Activated naive CD4-positive, alpha-beta T cell treated with anti-CD3 and anti-CD28 coated beads for 36 hours (primary cell): ENCODE measurements at regions of chr12 and their contacts with region 1.

Region 1: GRCh38 chr12:96194971-96195844 is 1.0 kb downstream of the ELK3 start:
- DNase-seq: peak; percentile 91
- H3K4me3 Mint-ChIP-seq: peak overlapping the region; percentile 99
- H3K27ac Mint-ChIP-seq: peak overlapping the region; percentile 100
- H3K4me1 Mint-ChIP-seq: peaks cover 54% of the 10 kb centered on the region
- H3K27me3 Mint-ChIP-seq: no peaks in the 10 kb centered on the region

Region 2: DNA sequence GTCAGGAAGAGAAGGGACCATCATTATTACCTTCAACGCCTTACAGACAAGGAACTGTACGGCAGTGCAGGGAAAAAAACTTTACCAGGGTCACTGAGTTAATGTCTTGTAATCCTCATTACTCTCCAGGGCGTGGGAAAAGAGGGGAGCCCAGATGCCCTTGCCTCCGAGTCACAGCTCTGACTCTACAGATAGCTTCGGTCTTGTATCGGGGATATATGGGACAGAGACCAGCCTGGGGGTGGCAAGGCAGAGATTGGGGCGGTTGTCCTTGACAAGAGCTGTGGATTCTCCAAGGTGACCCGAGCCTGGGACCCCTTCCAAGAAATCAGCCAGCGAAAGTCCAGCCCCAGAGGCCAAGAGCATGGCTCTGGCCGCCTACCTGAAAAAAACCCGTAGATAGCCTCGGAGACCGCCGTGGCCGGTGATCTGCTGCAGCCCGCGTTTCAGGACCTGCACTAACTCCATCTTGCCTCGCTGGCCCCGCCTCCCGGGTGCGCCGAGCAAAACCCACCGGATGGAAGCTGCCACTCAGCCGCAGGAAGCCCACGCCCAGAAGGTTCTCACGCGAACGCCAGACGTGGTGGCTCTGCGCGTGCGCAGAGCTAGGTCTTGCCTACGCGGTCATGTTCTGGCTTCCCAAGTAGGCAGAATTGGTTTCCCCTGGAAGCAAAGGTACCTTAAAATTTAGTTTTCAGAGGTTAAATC is 1191.8 kb before region 1 on chr12 and contains the start of gene NDUFA12:
- CTCF ChIA-PET with region 1: no interaction called
- intact Hi-C with region 1: loop called (anchors 2 kb)
- DNase-seq: peak; percentile 97
- H3K4me3 Mint-ChIP-seq: peak within 1 kb of the TSS; percentile 89
- H3K27ac Mint-ChIP-seq: peak within 1 kb of the TSS; percentile 86
- H3K4me1 Mint-ChIP-seq: peaks cover 51% of the 10 kb centered on the region
- H3K27me3 Mint-ChIP-seq: no peaks in the 10 kb centered on the region
- total RNA-seq, gene NDUFA12: 147 to 160 TPM

Region 3: DNA sequence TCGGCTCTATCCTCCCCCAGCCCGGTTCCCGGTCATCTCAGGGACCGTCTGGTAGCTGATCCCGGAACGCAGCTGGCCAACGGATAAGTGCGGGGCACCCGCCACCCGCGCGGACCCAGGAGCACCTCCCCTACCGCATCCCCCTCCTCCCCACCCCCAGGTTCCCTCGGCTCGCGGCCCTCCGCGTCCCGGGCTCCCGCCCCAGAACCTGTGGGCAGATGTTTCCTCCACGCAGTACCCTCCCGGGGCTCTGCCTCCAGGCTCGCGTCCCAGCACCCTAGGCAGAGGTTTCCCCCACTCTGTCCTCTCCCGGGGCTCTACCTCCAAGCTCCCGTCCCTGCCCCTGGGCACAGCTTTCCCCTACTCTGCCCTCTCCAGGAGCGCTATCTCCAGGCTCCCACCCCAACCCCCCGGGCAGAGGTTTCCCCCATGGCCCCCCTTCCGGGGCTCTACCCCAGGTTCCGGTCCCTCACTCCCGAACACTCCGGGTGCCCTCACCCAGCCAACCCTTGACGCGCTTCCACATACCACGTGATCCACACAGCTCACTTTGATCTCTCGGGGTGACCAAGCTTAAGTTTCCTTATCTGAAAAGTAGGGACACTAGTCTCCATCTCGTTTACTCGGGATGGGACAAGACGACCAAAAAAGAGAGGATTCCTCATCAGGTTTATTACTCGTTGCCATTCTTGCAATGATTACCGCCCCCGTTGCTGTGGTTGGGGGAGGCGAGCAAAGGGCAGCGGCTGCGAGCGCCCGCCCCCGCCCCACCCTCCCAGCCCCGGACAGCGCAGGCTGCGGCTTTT is 252.5 kb before region 1 on chr12 and contains the start of gene CCDC38:
- CTCF ChIA-PET with region 1: no interaction called
- intact Hi-C with region 1: loop called (anchors 2 kb)
- DNase-seq: peak; percentile 91
- H3K4me3 Mint-ChIP-seq: peak within 1 kb of the TSS; percentile 86
- H3K27ac Mint-ChIP-seq: peak within 1 kb of the TSS; percentile 80
- H3K4me1 Mint-ChIP-seq: peaks cover 4% of the 10 kb centered on the region
- H3K27me3 Mint-ChIP-seq: no peaks in the 10 kb centered on the region
- total RNA-seq, gene CCDC38: 0.49 TPM in 1 of 2 experiments, not detected in the other

Region 4: GRCh38 chr12:96132819-96133218 is 62.4 kb before region 1 on chr12:
- CTCF ChIA-PET with region 1: no interaction called
- intact Hi-C with region 1: loop called (anchors 2 kb)
- DNase-seq: peak; percentile 27
- H3K4me3 Mint-ChIP-seq: no peak overlapping the region
- H3K27ac Mint-ChIP-seq: no peak overlapping the region
- H3K4me1 Mint-ChIP-seq: peaks cover 27% of the 10 kb centered on the region
- H3K27me3 Mint-ChIP-seq: no peaks in the 10 kb centered on the region

Region 5: GRCh38 chr12:96335270-96335669 is 140.1 kb after region 1 on chr12:
- CTCF ChIA-PET with region 1: no interaction called
- intact Hi-C with region 1: loop called (anchors 1 kb)
- DNase-seq: peak; percentile 34
- H3K4me3 Mint-ChIP-seq: no peak overlapping the region
- H3K27ac Mint-ChIP-seq: peak overlapping the region; percentile 65
- H3K4me1 Mint-ChIP-seq: peaks cover 39% of the 10 kb centered on the region
- H3K27me3 Mint-ChIP-seq: no peaks in the 10 kb centered on the region

Region 6: DNA sequence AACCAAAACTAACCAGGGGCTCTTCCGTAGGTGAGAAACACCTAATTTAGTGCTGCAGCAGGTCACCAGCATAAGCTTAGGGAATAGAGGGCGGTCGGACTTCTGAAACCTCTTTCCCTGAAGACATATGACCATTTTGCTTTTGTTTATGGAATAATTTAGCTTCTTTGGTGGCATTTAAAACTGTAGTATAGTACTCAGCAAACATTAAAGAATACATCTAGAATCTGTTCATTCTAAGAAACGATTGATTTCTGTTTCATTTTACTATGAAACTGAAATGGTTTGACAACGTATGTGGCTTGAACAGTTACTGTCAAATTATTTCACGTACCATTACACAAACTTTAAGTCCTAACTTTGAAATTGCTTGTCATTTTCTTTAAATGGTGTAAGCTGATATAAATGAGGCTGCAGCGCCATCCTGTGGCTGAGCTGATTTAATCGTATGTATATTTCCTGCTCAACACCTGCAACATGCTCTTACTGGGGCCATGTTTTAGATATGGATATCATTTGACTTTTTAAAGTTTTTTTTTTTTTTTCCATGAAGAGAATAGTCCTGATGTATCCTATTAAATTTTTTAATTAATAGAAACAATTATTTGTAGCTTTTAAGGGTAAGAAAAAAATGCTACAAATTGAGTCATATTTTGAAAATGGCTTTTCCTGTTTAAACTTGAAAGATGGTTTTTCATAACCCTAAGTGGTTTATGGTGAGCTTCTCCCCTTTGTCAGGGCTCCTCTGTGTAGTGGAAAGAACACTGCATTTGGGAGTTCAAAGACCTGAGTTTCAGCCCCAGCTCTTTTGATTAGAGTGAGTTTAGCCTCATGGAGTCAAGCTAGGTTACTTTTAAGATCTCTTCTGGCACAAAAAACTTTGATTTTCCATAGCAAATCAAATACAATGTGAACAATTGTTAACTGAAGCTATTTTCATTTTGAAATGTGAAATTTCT is 321.5 kb after region 1 on chr12:
- CTCF ChIA-PET with region 1: interaction called, 4 read pairs
- intact Hi-C with region 1: loop called (anchors 1 kb)
- DNase-seq: peak; percentile 96
- H3K4me3 Mint-ChIP-seq: peak overlapping the region; percentile 2
- H3K27ac Mint-ChIP-seq: peak overlapping the region; percentile 25
- H3K4me1 Mint-ChIP-seq: peaks cover 16% of the 10 kb centered on the region
- H3K27me3 Mint-ChIP-seq: no peaks in the 10 kb centered on the region